ENCODE measurements at regions of chr19 and their contacts with region 1.

Region 1: GRCh38 chr19:43809762-43810696 is 7.8 kb upstream of the LYPD5 start:
- DNase-seq: peak; percentile 70
- ATAC-seq: peak; percentile 39
- H3K4me3 ChIP-seq: no peak overlapping the region
- H3K4me3 Mint-ChIP-seq: no peak overlapping the region
- H3K27ac ChIP-seq: no peak overlapping the region
- H3K27ac Mint-ChIP-seq: no peak overlapping the region
- H3K4me1 ChIP-seq: no peaks in the 10 kb centered on the region
- H3K4me1 Mint-ChIP-seq: no peaks in the 10 kb centered on the region
- H3K27me3 ChIP-seq: peaks cover 0 to 6% (median 1%) of the 10 kb centered on the region in 4 experiments
- H3K27me3 Mint-ChIP-seq: peaks cover 37% of the 10 kb centered on the region
- CTCF ChIP-seq: peak; percentile 83

Region 2: GRCh38 chr19:43430142-43430710 is 379.8 kb before region 1 on chr19:
- CTCF ChIA-PET with region 1: interaction called, 12 read pairs
- POLR2A ChIA-PET with region 1: no interaction called
- intact Hi-C with region 1: no loop called
- DNase-seq: no peak
- ATAC-seq: peak; percentile 49
- H3K4me3 ChIP-seq: no peak overlapping the region
- H3K4me3 Mint-ChIP-seq: no peak overlapping the region
- H3K27ac ChIP-seq: peak overlapping the region in 1 of 2 donors; percentile 39
- H3K27ac Mint-ChIP-seq: no peak overlapping the region
- H3K4me1 ChIP-seq: peaks cover 8% of the 10 kb centered on the region in 2 donors
- H3K4me1 Mint-ChIP-seq: peaks cover 25% of the 10 kb centered on the region
- H3K27me3 ChIP-seq: peaks cover 0 to 2% (median 0%) of the 10 kb centered on the region in 4 experiments
- H3K27me3 Mint-ChIP-seq: no peaks in the 10 kb centered on the region
- CTCF ChIP-seq: peak; percentile 10

Region 3: DNA sequence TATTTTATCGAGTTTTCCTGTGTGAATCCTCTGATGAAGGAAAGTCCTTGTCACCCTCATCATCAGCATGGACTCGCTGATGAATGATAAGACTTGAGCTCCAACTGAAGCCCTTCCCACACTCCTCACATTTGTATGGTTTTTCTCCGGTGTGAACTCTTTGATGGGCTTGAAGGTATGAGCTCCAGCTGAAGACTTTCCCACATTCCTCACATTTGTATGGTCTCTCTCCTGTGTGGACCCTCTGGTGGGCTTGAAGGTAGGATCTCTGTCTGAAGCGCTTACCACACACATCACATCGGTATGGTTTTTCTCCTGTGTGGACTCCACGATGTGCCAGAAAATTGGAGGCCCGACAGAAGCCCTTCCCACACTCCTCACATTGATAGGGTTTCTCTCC is 103.4 kb after region 1 on chr19:
- CTCF ChIA-PET with region 1: no interaction called
- POLR2A ChIA-PET with region 1: no interaction called
- intact Hi-C with region 1: no loop called
- DNase-seq: no peak
- ATAC-seq: no peak
- H3K4me3 ChIP-seq: no peak overlapping the region
- H3K4me3 Mint-ChIP-seq: no peak overlapping the region
- H3K27ac ChIP-seq: no peak overlapping the region
- H3K27ac Mint-ChIP-seq: no peak overlapping the region
- H3K4me1 ChIP-seq: no peaks in the 10 kb centered on the region
- H3K4me1 Mint-ChIP-seq: no peaks in the 10 kb centered on the region
- H3K27me3 ChIP-seq: no peaks in the 10 kb centered on the region
- H3K27me3 Mint-ChIP-seq: no peaks in the 10 kb centered on the region
- CTCF ChIP-seq: no peak

Measured in B cell (primary cell).